ENCODE measurements at regions of chr15 and their contacts with region 1.

Region 1: DNA sequence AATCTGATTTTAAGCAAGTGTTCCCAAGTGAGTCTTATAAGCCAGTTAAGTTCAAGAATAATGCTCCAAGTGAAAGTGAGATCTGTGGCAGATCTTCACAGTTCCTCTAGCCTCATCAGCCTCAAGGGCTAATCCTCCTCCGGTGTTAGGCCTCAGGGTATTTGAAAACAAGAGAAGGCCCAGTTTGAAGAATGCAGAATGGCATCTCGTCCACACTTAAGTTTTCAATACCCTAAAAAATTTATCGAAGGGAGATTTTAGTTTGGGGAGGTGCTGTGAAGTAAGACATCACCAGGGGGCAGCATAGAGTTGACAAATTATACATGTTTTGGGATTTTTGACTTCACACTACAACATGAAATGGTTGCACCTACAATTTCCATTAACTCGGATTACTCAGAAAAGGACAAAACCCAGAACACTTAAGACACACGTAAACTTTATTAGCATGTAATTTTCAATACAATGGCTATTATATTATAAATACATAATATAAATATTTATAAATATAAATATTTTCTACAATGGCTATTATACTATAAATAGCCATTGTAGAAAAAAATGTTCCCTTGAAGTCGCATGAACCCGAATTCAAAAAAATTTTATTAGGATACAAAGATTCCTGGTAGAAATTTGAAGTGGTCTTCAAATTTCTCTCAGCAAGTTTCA is 2.3 kb upstream of the TMEM266 start:
- DNase-seq: peak; percentile 15
- ATAC-seq: no peak
- H3K4me3 ChIP-seq: no peak overlapping the region
- H3K27ac ChIP-seq: no peak overlapping the region
- H3K4me1 ChIP-seq: peaks cover 13% of the 10 kb centered on the region
- H3K27me3 ChIP-seq: peaks cover 0 to 34% of the 10 kb centered on the region in 2 experiments; a peak in 3 of 5 replicates
- CTCF ChIP-seq: peak; percentile 65
- EP300 ChIP-seq: no peak
- POLR2A ChIP-seq: no peak
- RAD21 ChIP-seq: peak; percentile 49; the same call in 1 of the 2 replicates

Region 2: GRCh38 chr15:75647370-75648155 is 409.9 kb before region 1 on chr15 and contains the start of gene SNX33:
- CTCF ChIA-PET with region 1: no interaction called
- POLR2A ChIA-PET with region 1: no interaction called
- in situ Hi-C with region 1: no loop called
- intact Hi-C with region 1: no loop called
- DNase-seq: peak; percentile 78
- ATAC-seq: peak; percentile 74
- H3K4me3 ChIP-seq: peak within 1 kb of the TSS; percentile 83 to 96 (median 93)
- H3K27ac ChIP-seq: peak within 1 kb of the TSS; percentile 98
- H3K4me1 ChIP-seq: peaks cover 50% of the 10 kb centered on the region
- H3K27me3 ChIP-seq: peaks cover 0 to 2% of the 10 kb centered on the region in 2 experiments; a peak in 1 of 5 replicates
- CTCF ChIP-seq: peak; percentile 70
- EP300 ChIP-seq: no peak
- POLR2A ChIP-seq: no peak; a peak in 1 of 4 replicates
- RAD21 ChIP-seq: no peak
- total RNA-seq, gene SNX33: 10.8 and 11.0 TPM in 2 replicates

Region 3: GRCh38 chr15:76139368-76140073 is 82.1 kb after region 1 on chr15:
- CTCF ChIA-PET with region 1: interaction called, 71 read pairs
- POLR2A ChIA-PET with region 1: no interaction called
- in situ Hi-C with region 1: loop called (anchors 5 kb)
- intact Hi-C with region 1: loop called (anchors 1 kb)
- DNase-seq: peak; percentile 57
- ATAC-seq: peak; percentile 89
- H3K4me3 ChIP-seq: no peak overlapping the region
- H3K27ac ChIP-seq: no peak overlapping the region
- H3K4me1 ChIP-seq: no peaks in the 10 kb centered on the region
- H3K27me3 ChIP-seq: peaks cover 1 to 20% of the 10 kb centered on the region in 2 experiments; a peak in 4 of 5 replicates
- CTCF ChIP-seq: peak; percentile 90
- EP300 ChIP-seq: no peak
- POLR2A ChIP-seq: no peak
- RAD21 ChIP-seq: peak; percentile 91

Region 4: DNA sequence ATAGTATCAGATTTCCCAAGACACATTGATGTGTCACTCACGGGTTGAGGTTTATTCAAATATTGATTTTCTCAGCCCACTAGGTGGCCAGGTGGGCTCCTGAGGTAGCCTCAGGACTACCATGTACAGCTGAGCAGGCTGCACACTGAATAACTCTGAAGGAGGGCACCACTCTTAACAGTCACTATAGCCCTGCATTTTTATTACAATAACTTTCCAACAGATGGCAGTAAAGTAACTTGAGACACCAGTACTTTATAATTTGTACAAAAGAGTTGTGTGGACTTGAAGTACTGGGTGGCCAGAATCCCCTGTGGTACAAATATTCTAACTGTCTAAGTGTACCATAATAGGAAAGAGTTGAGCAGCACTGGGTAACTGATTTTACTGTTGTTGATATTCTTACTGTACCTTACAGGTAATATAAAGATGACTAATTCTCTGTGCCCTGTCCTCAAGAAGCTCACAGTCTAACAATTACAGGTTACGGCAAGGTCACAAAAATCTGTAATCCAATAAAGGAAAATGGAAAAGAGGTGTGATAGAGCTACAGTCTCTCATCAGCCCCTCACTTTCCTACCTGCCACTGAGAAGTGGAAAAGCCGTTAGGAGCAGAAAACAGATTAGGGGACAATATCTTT is 177.8 kb after region 1 on chr15:
- CTCF ChIA-PET with region 1: no interaction called
- POLR2A ChIA-PET with region 1: no interaction called
- in situ Hi-C with region 1: no loop called
- intact Hi-C with region 1: no loop called
- DNase-seq: peak; percentile 42
- ATAC-seq: peak; percentile 90
- H3K4me3 ChIP-seq: no peak overlapping the region
- H3K27ac ChIP-seq: peak overlapping the region; percentile 35
- H3K4me1 ChIP-seq: peaks cover 51% of the 10 kb centered on the region
- H3K27me3 ChIP-seq: no peaks in the 10 kb centered on the region
- CTCF ChIP-seq: peak; percentile 53
- EP300 ChIP-seq: no peak
- POLR2A ChIP-seq: no peak
- RAD21 ChIP-seq: peak; percentile 32; the same call in 1 of the 2 replicates

Measured in HepG2 (cell line).